ENCODE measurements at regions of chr16 and their contacts with region 1.

Region 1: GRCh38 chr16:24700549-24701392 is 28.7 kb upstream of the TNRC6A start:
- DNase-seq: peak; percentile 90 to 95
- H3K4me3 ChIP-seq: peak overlapping the region; percentile 36; the same call in 1 of the 2 replicates
- H3K27ac ChIP-seq: peak overlapping the region; percentile 91
- H3K4me1 ChIP-seq: peaks cover 34% of the 10 kb centered on the region
- H3K27me3 ChIP-seq: no peaks in the 10 kb centered on the region
- CTCF ChIP-seq: peak; percentile 47

Region 2: DNA sequence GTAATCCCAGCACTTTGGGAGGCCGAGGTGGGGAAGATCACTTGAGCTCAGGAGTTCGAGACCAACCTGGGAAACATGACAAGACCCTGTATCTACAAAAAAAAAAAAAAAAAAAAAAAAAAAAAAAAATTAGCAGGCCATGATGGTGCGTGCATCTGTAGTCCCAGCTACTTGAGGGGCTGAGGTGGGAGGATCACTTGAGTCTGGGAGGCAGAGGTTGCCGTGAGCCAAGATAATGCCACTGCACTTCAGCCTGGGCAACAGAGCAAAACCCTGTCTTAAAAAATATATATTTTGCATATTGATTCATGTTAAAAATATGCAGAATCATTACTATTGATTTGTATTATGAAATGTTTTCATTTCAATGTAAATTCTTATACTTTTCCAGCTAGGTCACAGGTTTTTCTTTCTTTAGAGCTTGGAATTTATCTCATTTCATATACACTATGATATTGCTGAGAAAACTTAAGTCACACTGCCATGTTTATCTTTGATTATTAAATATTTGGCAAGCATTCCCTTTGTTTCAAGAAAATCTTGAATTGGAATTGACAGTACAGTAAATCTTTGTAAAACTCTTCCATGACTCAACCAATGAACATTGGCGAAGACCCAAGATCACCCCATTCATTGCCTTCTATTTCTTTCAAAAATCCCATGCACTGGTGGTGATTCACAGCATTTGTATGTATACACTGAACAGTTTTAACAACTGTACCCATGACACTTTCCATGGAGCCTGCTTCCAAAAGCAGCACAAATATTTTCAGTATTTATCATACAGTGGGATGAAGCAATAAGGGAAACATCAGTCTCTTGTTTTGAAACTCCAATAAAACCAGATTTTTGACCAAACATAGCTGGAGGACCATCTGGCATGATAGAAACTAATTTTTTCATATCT is 54.8 kb before region 1 on chr16:
- CTCF ChIA-PET with region 1: no interaction called
- POLR2A ChIA-PET with region 1: no interaction called
- intact Hi-C with region 1: loop called (anchors 1 kb)
- DNase-seq: peak; percentile 81 to 99
- H3K4me3 ChIP-seq: no peak overlapping the region
- H3K27ac ChIP-seq: peak overlapping the region; percentile 93
- H3K4me1 ChIP-seq: peaks cover 36% of the 10 kb centered on the region
- H3K27me3 ChIP-seq: no peaks in the 10 kb centered on the region
- CTCF ChIP-seq: no peak

Region 3: DNA sequence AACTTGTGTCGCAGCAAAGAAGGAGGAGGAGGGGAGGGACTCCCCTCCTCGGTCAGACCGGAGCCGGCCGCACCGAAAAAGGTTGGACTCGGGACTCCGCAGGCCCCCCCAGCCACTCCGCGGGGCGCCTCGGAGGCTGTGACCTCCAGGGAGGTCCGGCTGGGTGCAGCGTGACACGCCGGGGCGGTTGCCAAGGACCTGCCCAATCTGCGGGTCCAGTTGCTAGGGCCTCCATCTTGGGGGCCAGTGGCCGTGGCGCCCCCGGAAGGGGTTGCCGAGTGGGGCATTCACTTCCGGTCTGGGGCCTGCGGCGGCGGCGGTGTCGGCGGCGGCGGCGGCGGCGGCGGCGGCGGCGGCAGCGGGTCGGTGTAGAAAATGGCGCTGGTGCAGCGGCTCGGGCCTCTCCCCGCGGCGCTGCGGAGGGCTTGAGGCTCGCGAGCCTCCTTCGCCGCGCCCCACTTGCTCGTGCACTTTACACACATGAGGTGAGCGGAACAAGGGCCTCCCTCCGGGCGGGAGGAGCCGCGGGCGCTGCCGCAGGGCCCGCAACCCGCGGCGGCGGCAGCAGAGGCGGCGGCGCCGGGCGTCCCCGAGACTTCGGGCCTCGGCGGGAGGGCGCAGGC is 28.7 kb after region 1 on chr16 and contains the start of gene TNRC6A:
- CTCF ChIA-PET with region 1: interaction called, 15 read pairs
- POLR2A ChIA-PET with region 1: no interaction called
- intact Hi-C with region 1: loop called (anchors 1 kb)
- DNase-seq: peak; percentile 77 to 94
- H3K4me3 ChIP-seq: peak within 1 kb of the TSS; percentile 83
- H3K27ac ChIP-seq: peak within 1 kb of the TSS; percentile 69
- H3K4me1 ChIP-seq: peaks cover 33% of the 10 kb centered on the region
- H3K27me3 ChIP-seq: no peaks in the 10 kb centered on the region
- CTCF ChIP-seq: no peak
- total RNA-seq, gene TNRC6A: 66.8 and 84.8 TPM in 2 replicates

Region 4: GRCh38 chr16:24758373-24758772 is 57.6 kb after region 1 on chr16:
- CTCF ChIA-PET with region 1: interaction called, 12 read pairs
- POLR2A ChIA-PET with region 1: no interaction called
- intact Hi-C with region 1: no loop called
- DNase-seq: no peak
- H3K4me3 ChIP-seq: no peak overlapping the region
- H3K27ac ChIP-seq: no peak overlapping the region
- H3K4me1 ChIP-seq: no peaks in the 10 kb centered on the region
- H3K27me3 ChIP-seq: no peaks in the 10 kb centered on the region
- CTCF ChIP-seq: no peak

Region 5: GRCh38 chr16:24776501-24777220 is 75.9 kb after region 1 on chr16:
- CTCF ChIA-PET with region 1: no interaction called
- POLR2A ChIA-PET with region 1: no interaction called
- intact Hi-C with region 1: no loop called
- DNase-seq: no peak
- H3K4me3 ChIP-seq: no peak overlapping the region
- H3K27ac ChIP-seq: no peak overlapping the region
- H3K4me1 ChIP-seq: peaks cover 5% of the 10 kb centered on the region
- H3K27me3 ChIP-seq: no peaks in the 10 kb centered on the region
- CTCF ChIP-seq: no peak

Region 6: DNA sequence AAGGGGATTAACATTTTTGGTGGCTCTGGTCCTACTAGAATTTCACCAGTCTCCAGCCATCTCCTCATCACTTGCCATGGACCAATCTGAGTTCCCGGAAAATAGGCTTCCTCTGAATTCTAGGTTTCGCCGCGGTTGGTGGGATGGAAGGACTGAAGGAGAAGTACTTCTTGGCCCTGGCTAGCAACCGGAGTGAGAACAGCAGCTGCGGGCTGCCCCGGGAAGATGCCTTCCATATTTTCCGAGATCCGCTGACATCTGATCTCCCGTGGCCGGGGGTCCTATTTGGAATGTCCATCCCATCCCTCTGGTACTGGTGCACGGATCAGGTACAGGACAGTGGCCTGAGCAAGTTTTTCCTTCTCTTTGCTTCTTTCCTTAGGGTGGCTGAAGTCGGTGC is 190.0 kb after region 1 on chr16:
- CTCF ChIA-PET with region 1: no interaction called
- POLR2A ChIA-PET with region 1: no interaction called
- intact Hi-C with region 1: no loop called
- DNase-seq: no peak
- H3K4me3 ChIP-seq: no peak overlapping the region
- H3K27ac ChIP-seq: no peak overlapping the region
- H3K4me1 ChIP-seq: no peaks in the 10 kb centered on the region
- H3K27me3 ChIP-seq: no peaks in the 10 kb centered on the region
- CTCF ChIP-seq: no peak